ENCODE measurements at regions of chr20 and their contacts with region 1.

Region 1: DNA sequence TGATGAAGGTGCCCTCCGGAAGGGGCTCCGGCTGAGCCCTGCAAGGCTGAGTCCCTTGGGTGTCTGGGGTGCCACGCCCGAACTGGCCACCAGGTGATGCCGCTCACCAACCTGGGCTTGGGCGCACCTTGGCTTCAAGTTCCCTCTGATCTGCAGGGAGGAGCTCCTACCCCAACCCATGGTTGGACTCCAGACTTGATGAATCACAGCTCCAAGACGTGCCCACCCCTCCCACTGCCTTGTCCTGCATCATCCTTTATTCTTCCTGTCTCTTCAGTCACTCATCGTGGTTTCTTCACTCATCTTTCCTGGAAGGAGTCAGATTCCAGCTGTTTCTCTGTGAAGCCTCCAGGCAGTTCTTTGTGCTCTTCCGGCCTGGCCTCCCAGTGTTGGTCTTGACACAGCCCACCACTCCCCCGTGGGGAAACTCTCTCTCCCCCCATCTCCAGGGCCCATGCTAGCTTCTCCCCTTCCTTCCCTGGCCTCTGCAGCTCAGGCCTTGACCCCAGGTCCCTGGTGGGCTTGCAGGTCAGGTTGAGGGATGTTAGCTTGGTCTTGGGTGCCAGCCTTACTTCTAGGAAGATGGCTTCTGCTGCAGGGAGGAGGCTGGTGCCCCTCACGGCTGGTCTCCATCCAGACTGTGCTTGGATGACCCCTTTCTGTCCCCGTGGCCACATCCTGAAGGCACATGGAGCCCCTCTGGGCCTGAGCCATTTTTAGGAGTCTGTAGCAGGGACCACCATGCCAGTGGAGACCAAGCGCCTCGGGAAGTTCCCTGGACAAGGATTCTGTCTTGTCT is 2.6 kb upstream of the ZBP1 start:
- DNase-seq: peak; percentile 88 to 91
- ATAC-seq: peak; percentile 90 to 98
- H3K4me3 ChIP-seq: no peak overlapping the region
- H3K27ac ChIP-seq: peak overlapping the region; percentile 67 to 82
- H3K4me1 ChIP-seq: peaks cover 25% of the 10 kb centered on the region
- CTCF ChIP-seq: peak; percentile 87
- EP300 ChIP-seq: no peak
- POLR2A ChIP-seq: no peak
- RAD21 ChIP-seq: peak; percentile 95 to 96

Region 2: GRCh38 chr20:57611586-57612311 is 11.0 kb before region 1 on chr20:
- CTCF ChIA-PET with region 1: interaction called, 30 read pairs
- POLR2A ChIA-PET with region 1: no interaction called
- DNase-seq: no peak
- ATAC-seq: no peak
- H3K4me3 ChIP-seq: no peak overlapping the region
- H3K27ac ChIP-seq: no peak overlapping the region
- H3K4me1 ChIP-seq: no peaks in the 10 kb centered on the region
- CTCF ChIP-seq: no peak
- EP300 ChIP-seq: no peak
- POLR2A ChIP-seq: no peak
- RAD21 ChIP-seq: no peak

Region 3: GRCh38 chr20:57638173-57638894 is 15.6 kb after region 1 on chr20:
- CTCF ChIA-PET with region 1: interaction called, 27 read pairs
- POLR2A ChIA-PET with region 1: interaction called, 4 read pairs
- DNase-seq: peak in 1 of 2 experiments; percentile 82
- ATAC-seq: peak; percentile 93 to 99
- H3K4me3 ChIP-seq: peak overlapping the region; percentile 14; the same call in 2 of the 3 replicates
- H3K27ac ChIP-seq: peak overlapping the region; percentile 66 to 82
- H3K4me1 ChIP-seq: peaks cover 18% of the 10 kb centered on the region
- CTCF ChIP-seq: no peak
- EP300 ChIP-seq: no peak
- POLR2A ChIP-seq: no peak
- RAD21 ChIP-seq: 0 out of 5 replicates have a peak, but pooled peaks of 1 of the 2 experiments have one; percentile 11

Region 4: DNA sequence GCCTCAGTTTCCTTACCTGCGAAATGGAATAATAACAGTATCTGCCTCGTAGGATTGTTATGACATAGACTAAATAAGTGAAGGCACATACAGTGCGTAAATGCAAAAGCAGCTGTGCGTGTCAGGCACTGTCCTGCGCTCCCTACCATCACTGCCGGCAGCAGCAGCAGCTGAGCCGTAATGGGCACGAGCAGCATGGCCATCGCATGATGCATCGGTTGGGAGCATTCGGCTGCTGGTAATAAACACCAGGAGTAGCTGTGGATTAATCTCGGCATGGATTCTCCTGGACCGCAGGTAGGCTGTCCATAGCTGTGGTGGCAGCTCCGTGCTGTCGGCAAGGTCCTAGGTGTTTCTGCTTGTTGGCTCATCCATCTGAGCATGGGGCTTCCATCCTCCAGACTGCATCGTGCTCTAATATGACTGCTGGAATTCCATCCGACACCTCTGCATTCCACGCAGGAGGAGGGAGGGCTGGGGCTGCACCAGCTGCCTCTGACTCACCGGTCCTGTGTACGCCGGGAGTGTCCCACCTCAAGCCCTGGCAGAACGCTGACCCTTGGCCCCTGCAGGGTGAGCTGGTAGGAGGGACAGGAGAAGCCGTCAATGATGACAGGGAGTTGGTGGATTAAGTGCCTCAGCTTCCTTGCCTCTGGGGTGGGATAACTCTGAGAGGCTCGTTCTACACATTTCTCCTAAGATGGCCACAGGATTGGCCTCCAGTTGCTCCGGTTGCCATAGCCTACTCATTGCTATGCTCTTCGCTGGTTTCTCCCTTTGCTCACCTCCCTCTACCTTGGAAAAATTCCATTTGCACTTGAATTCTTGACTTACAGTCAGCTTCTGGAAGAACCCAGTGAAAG is 188.0 kb after region 1 on chr20:
- CTCF ChIA-PET with region 1: no interaction called
- POLR2A ChIA-PET with region 1: no interaction called
- DNase-seq: peak in 1 of 2 experiments; percentile 60
- ATAC-seq: peak; percentile 70 to 73
- H3K4me3 ChIP-seq: no peak overlapping the region
- H3K27ac ChIP-seq: peak overlapping the region; percentile 51 to 59
- H3K4me1 ChIP-seq: peaks cover 24% of the 10 kb centered on the region
- CTCF ChIP-seq: no peak
- EP300 ChIP-seq: no peak
- POLR2A ChIP-seq: no peak
- RAD21 ChIP-seq: no peak

Region 5: GRCh38 chr20:58179432-58180099 is 556.8 kb after region 1 on chr20:
- CTCF ChIA-PET with region 1: interaction called, 28 read pairs
- POLR2A ChIA-PET with region 1: interaction called, 3 read pairs
- DNase-seq: peak; percentile 48
- ATAC-seq: peak; percentile 89 to 95
- H3K4me3 ChIP-seq: peak overlapping the region; percentile 42
- H3K27ac ChIP-seq: peak overlapping the region; percentile 78 to 94
- H3K4me1 ChIP-seq: peaks cover 13% of the 10 kb centered on the region
- CTCF ChIP-seq: peak; percentile 97
- EP300 ChIP-seq: no peak
- POLR2A ChIP-seq: no peak
- RAD21 ChIP-seq: peak; percentile 91 to 99

Region 6: DNA sequence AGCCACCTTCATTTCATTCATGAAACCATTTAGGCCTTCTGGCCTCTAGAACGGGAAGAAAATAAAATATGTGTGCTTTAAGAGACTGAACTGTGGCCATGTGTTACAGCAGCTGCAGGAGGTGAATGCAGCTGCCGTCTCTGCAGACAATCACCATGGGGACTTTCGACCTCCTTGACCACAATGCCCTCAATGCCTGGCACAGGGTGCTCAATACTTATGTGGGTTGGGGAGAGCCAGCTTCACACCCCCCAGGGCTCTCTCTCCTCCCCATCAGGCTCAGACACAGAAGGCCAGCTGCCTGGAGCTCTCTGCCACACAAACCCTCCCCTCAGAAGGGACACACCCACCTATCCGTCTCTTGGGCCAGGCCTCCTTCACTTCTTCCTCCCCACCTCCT is 562.2 kb after region 1 on chr20:
- CTCF ChIA-PET with region 1: interaction called, 28 read pairs
- POLR2A ChIA-PET with region 1: interaction called, 3 read pairs
- DNase-seq: no peak
- ATAC-seq: no peak
- H3K4me3 ChIP-seq: no peak overlapping the region
- H3K27ac ChIP-seq: no peak overlapping the region
- H3K4me1 ChIP-seq: peaks cover 2% of the 10 kb centered on the region; the same call in 1 of the 3 replicates
- CTCF ChIP-seq: no peak
- EP300 ChIP-seq: no peak
- POLR2A ChIP-seq: no peak
- RAD21 ChIP-seq: no peak

Measured in A549 (cell line).